ENCODE measurements at regions of chr4 and their contacts with region 1.

Region 1: GRCh38 chr4:129326571-129327460 is 230.9 kb downstream of the C4orf33 start:
- DNase-seq: no peak
- ATAC-seq: no peak
- H3K4me3 ChIP-seq: no peak overlapping the region
- H3K27ac ChIP-seq: no peak overlapping the region
- H3K4me1 ChIP-seq: no peaks in the 10 kb centered on the region
- H3K27me3 ChIP-seq: no peaks in the 10 kb centered on the region
- CTCF ChIP-seq: no peak
- EP300 ChIP-seq: no peak
- POLR2A ChIP-seq: no peak
- RAD21 ChIP-seq: no peak

Region 2: DNA sequence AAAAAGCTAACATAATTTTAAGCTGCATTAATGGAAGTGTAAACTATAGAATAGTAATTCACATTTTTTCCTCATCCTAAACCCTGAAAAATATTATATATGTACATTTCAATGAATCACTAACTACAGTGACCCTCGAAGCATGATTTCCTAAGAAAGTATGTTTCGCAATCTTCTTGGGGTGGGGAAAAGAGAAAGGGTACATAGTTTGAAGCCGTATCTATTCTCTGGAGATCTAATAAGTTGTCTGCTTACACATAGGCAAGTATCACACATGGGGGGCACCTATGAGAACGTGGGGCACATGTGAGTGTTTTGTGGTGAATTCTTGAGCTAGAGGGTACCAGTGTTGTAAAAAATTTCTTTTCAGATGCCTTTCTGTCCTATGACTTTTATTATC is 446.2 kb before region 1 on chr4:
- CTCF ChIA-PET with region 1: no interaction called
- POLR2A ChIA-PET with region 1: no interaction called
- in situ Hi-C with region 1: no loop called
- intact Hi-C with region 1: loop called (anchors 10 kb)
- DNase-seq: no peak
- ATAC-seq: no peak
- H3K4me3 ChIP-seq: no peak overlapping the region
- H3K27ac ChIP-seq: no peak overlapping the region
- H3K4me1 ChIP-seq: no peaks in the 10 kb centered on the region
- H3K27me3 ChIP-seq: no peaks in the 10 kb centered on the region
- CTCF ChIP-seq: no peak
- EP300 ChIP-seq: no peak
- POLR2A ChIP-seq: no peak
- RAD21 ChIP-seq: no peak